Caco-2 (cell line): ENCODE measurements at regions of chr15 and their contacts with region 1.

Region 1: GRCh38 chr15:40847205-40847961 is 3.5 kb downstream of the SPINT1 start:
- DNase-seq: peak; percentile 90 to 95
- H3K4me3 ChIP-seq: peak overlapping the region; percentile 85
- H3K4me3 Mint-ChIP-seq: peak overlapping the region; percentile 99
- H3K27ac Mint-ChIP-seq: peak overlapping the region; percentile 95
- H3K4me1 ChIP-seq: peaks cover 39% of the 10 kb centered on the region
- H3K4me1 Mint-ChIP-seq: peaks cover 29% of the 10 kb centered on the region
- H3K27me3 ChIP-seq: no peaks in the 10 kb centered on the region
- H3K27me3 Mint-ChIP-seq: no peaks in the 10 kb centered on the region
- CTCF ChIP-seq: no peak

Region 2: DNA sequence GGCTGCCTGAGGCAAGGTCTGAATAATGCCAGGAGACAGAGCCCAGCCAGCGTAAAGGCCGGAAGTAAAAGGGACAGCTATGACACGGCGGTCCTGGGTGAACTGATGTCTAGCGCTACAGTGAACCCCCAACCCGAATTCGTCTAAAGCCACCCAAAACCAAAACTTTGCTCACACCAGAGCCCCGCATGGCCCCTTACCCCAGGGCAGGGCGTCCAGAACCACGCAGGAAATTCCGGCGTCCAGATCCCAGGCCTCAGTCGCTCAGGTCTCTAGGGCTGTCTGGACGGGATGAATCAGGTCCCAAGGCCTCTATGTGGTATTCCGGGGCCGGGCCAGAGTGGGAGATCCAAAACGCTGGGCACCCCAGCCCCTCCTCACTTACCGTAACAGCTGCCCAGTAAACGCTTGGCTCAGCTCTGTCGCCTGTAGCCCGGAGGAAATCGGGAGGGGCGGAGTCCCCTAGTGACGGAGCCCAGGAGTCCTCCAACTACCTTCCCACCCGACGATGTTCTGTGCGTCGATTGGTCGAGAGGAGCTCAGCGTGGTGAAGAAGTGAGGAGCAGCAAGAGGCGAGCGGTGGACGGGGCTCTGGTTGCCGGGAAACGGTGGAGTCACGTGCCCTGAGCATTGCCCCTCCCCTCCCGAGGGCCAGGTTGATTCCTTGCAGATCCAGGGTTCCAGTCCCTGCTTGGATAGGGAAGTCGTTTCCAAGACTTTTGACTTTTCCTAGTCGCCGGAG is 282.6 kb before region 1 on chr15 and contains the start of gene CCDC32:
- CTCF ChIA-PET with region 1: no interaction called
- POLR2A ChIA-PET with region 1: interaction called, 11 read pairs
- intact Hi-C with region 1: no loop called
- DNase-seq: peak; percentile 97 to 99
- H3K4me3 ChIP-seq: peak within 1 kb of the TSS; percentile 69
- H3K4me3 Mint-ChIP-seq: peak within 1 kb of the TSS; percentile 87
- H3K27ac Mint-ChIP-seq: peak within 1 kb of the TSS; percentile 94
- H3K4me1 ChIP-seq: no peaks in the 10 kb centered on the region
- H3K4me1 Mint-ChIP-seq: peaks cover 16% of the 10 kb centered on the region
- H3K27me3 ChIP-seq: no peaks in the 10 kb centered on the region
- H3K27me3 Mint-ChIP-seq: no peaks in the 10 kb centered on the region
- CTCF ChIP-seq: no peak
- total RNA-seq, gene CCDC32: 11.7 and 17.0 TPM in 2 replicates

Region 3: GRCh38 chr15:40769274-40770146 is 77.9 kb before region 1 on chr15 and contains the start of gene C15orf62:
- CTCF ChIA-PET with region 1: no interaction called
- POLR2A ChIA-PET with region 1: no interaction called
- intact Hi-C with region 1: no loop called
- DNase-seq: no peak
- H3K4me3 ChIP-seq: no peak within 1 kb of the TSS
- H3K4me3 Mint-ChIP-seq: no peak within 1 kb of the TSS
- H3K27ac Mint-ChIP-seq: no peak within 1 kb of the TSS
- H3K4me1 ChIP-seq: no peaks in the 10 kb centered on the region
- H3K4me1 Mint-ChIP-seq: peaks cover 11% of the 10 kb centered on the region
- H3K27me3 ChIP-seq: no peaks in the 10 kb centered on the region
- H3K27me3 Mint-ChIP-seq: no peaks in the 10 kb centered on the region
- CTCF ChIP-seq: no peak
- total RNA-seq, gene C15orf62: 0.91 and 1.3 TPM in 2 replicates

Region 4: DNA sequence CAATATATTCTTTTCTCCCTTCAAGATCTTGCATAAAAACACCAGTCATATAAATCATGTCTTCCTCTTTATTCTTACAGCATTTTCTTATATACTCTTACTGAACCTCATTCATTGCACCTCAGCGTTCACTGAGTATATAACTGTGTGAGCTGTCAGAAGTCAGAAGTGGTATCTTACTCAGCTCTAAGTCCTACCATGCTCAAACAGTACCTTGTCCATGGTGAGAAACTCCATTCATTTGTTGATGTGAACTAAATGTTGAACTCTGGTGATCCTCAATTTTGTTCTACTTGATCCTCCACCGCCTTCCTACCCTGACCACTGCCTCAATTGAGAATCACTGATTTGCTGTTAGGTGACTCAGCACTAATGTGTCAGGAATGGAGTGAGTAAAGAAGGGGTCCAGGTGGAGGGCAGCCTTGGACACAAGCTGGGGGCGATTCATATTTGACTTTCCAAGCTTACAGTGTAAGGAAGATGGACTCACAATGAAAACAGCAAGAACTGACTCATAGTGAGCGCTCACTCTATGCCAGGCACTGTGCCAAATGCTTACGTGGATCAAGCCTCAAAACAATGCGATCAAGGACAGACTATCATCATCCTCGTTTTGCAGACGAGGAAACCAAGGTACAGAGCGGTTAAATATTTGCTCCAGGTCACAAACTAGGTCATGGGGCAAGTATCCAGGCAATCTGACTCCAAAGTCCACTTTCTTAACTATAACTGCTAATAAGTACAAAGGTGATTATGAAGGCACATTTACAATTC is 54.0 kb before region 1 on chr15:
- CTCF ChIA-PET with region 1: interaction called, 5 read pairs
- POLR2A ChIA-PET with region 1: no interaction called
- intact Hi-C with region 1: loop called (anchors 2 kb)
- DNase-seq: no peak
- H3K4me3 ChIP-seq: no peak overlapping the region
- H3K4me3 Mint-ChIP-seq: no peak overlapping the region
- H3K27ac Mint-ChIP-seq: no peak overlapping the region
- H3K4me1 ChIP-seq: peaks cover 25% of the 10 kb centered on the region
- H3K4me1 Mint-ChIP-seq: peaks cover 34% of the 10 kb centered on the region
- H3K27me3 ChIP-seq: no peaks in the 10 kb centered on the region
- H3K27me3 Mint-ChIP-seq: no peaks in the 10 kb centered on the region
- CTCF ChIP-seq: no peak

Region 5: GRCh38 chr15:40825661-40826088 is 21.7 kb before region 1 on chr15:
- CTCF ChIA-PET with region 1: no interaction called
- POLR2A ChIA-PET with region 1: interaction called, 5 read pairs
- intact Hi-C with region 1: loop called (anchors 1 kb)
- DNase-seq: peak; percentile 81 to 84
- H3K4me3 ChIP-seq: no peak overlapping the region
- H3K4me3 Mint-ChIP-seq: peak overlapping the region; percentile 59
- H3K27ac Mint-ChIP-seq: peak overlapping the region; percentile 65
- H3K4me1 ChIP-seq: peaks cover 59% of the 10 kb centered on the region
- H3K4me1 Mint-ChIP-seq: peaks cover 37% of the 10 kb centered on the region
- H3K27me3 ChIP-seq: no peaks in the 10 kb centered on the region
- H3K27me3 Mint-ChIP-seq: no peaks in the 10 kb centered on the region
- CTCF ChIP-seq: no peak

Region 6: GRCh38 chr15:40857601-40858341 is 10.4 kb after region 1 on chr15:
- CTCF ChIA-PET with region 1: interaction called, 46 read pairs
- POLR2A ChIA-PET with region 1: interaction called, 8 read pairs
- intact Hi-C with region 1: loop called (anchors 1 kb)
- DNase-seq: peak; percentile 92 to 96
- H3K4me3 ChIP-seq: no peak overlapping the region
- H3K4me3 Mint-ChIP-seq: peak overlapping the region; percentile 56
- H3K27ac Mint-ChIP-seq: peak overlapping the region; percentile 86
- H3K4me1 ChIP-seq: peaks cover 24% of the 10 kb centered on the region
- H3K4me1 Mint-ChIP-seq: peaks cover 39% of the 10 kb centered on the region
- H3K27me3 ChIP-seq: no peaks in the 10 kb centered on the region
- H3K27me3 Mint-ChIP-seq: no peaks in the 10 kb centered on the region
- CTCF ChIP-seq: peak; percentile 89 to 94

Region 7: GRCh38 chr15:40873625-40874561 is 26.5 kb after region 1 on chr15 and contains the start of gene RHOV:
- CTCF ChIA-PET with region 1: interaction called, 10 read pairs
- POLR2A ChIA-PET with region 1: interaction called, 17 read pairs
- intact Hi-C with region 1: no loop called
- DNase-seq: peak; percentile 90 to 92
- H3K4me3 ChIP-seq: peak within 1 kb of the TSS; percentile 88
- H3K4me3 Mint-ChIP-seq: peak within 1 kb of the TSS; percentile 68
- H3K27ac Mint-ChIP-seq: peak within 1 kb of the TSS; percentile 64
- H3K4me1 ChIP-seq: peaks cover 15% of the 10 kb centered on the region
- H3K4me1 Mint-ChIP-seq: peaks cover 8% of the 10 kb centered on the region
- H3K27me3 ChIP-seq: no peaks in the 10 kb centered on the region
- H3K27me3 Mint-ChIP-seq: no peaks in the 10 kb centered on the region
- CTCF ChIP-seq: peak in 1 of 2 experiments; percentile 59
- total RNA-seq, gene RHOV: 3.2 and 4.4 TPM in 2 replicates